ENCODE measurements at regions of chr9 and their contacts with region 1.

Region 1: GRCh38 chr9:131046581-131047202 is 37.7 kb downstream of the LAMC3 start:
- DNase-seq: peak; percentile 75
- ATAC-seq: peak; percentile 83
- H3K4me3 Mint-ChIP-seq: no peak overlapping the region
- H3K27ac Mint-ChIP-seq: no peak overlapping the region
- H3K4me1 Mint-ChIP-seq: peaks cover 10% of the 10 kb centered on the region
- H3K27me3 Mint-ChIP-seq: peaks cover 4% of the 10 kb centered on the region
- CTCF ChIP-seq: peak; percentile 40

Region 2: GRCh38 chr9:130701056-130702022 is 345.4 kb before region 1 on chr9:
- CTCF ChIA-PET with region 1: interaction called, 15 read pairs
- POLR2A ChIA-PET with region 1: no interaction called
- intact Hi-C with region 1: loop called (anchors 2 kb)
- DNase-seq: peak; percentile 51
- ATAC-seq: peak; percentile 84
- H3K4me3 Mint-ChIP-seq: no peak overlapping the region
- H3K27ac Mint-ChIP-seq: no peak overlapping the region
- H3K4me1 Mint-ChIP-seq: peaks cover 19% of the 10 kb centered on the region
- H3K27me3 Mint-ChIP-seq: no peaks in the 10 kb centered on the region
- CTCF ChIP-seq: no peak

Region 3: DNA sequence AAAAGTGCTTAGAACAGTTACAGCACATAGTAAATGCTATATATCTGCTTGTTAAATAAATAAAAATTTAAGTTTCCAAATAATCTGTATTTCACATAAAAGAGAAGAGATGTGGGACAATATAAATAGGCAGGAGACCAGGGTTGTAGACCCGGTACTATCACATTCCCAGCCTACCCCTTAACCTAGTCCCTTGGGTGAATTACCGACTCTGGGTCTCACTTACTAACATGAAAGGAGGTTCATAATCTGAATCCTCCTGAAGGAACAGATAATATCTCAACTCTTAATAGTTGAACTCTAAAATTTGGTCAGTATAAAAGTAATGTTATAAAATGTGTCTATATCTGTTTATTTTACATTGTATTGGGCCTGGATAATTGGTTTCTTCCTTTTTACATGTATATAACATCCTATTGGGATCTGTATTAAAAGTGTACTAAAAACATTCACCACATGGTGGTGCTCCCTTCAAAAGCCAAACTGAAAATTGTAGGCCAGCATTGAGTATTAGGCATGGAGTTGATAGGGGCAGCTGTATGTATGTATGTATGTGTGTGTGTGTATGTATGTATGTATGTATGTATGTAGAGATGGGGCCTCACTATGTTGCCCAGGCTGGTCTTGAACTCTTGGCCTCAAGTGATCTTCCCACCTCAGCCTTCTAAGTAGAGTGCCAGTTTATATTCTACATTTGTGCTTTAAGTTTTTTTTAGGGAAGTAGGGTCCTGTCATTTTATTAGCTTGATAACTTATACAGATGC is 275.8 kb before region 1 on chr9:
- CTCF ChIA-PET with region 1: interaction called, 7 read pairs
- POLR2A ChIA-PET with region 1: interaction called, 3 read pairs
- intact Hi-C with region 1: loop called (anchors 1 kb)
- DNase-seq: no peak
- ATAC-seq: peak; percentile 66
- H3K4me3 Mint-ChIP-seq: no peak overlapping the region
- H3K27ac Mint-ChIP-seq: no peak overlapping the region
- H3K4me1 Mint-ChIP-seq: peaks cover 34% of the 10 kb centered on the region
- H3K27me3 Mint-ChIP-seq: no peaks in the 10 kb centered on the region
- CTCF ChIP-seq: no peak

Region 4: GRCh38 chr9:130940693-130941576 is 105.8 kb before region 1 on chr9:
- CTCF ChIA-PET with region 1: interaction called, 4 read pairs
- POLR2A ChIA-PET with region 1: no interaction called
- intact Hi-C with region 1: loop called (anchors 1 kb)
- DNase-seq: peak; percentile 74
- ATAC-seq: peak; percentile 89
- H3K4me3 Mint-ChIP-seq: peak overlapping the region; percentile 53
- H3K27ac Mint-ChIP-seq: no peak overlapping the region
- H3K4me1 Mint-ChIP-seq: peaks cover 16% of the 10 kb centered on the region
- H3K27me3 Mint-ChIP-seq: peaks cover 44% of the 10 kb centered on the region
- CTCF ChIP-seq: peak; percentile 48

Region 5: GRCh38 chr9:131018621-131019020 is 28.1 kb before region 1 on chr9:
- CTCF ChIA-PET with region 1: interaction called, 22 read pairs
- POLR2A ChIA-PET with region 1: no interaction called
- intact Hi-C with region 1: loop called (anchors 2 kb)
- DNase-seq: no peak
- ATAC-seq: no peak
- H3K4me3 Mint-ChIP-seq: no peak overlapping the region
- H3K27ac Mint-ChIP-seq: no peak overlapping the region
- H3K4me1 Mint-ChIP-seq: no peaks in the 10 kb centered on the region
- H3K27me3 Mint-ChIP-seq: peaks cover 12% of the 10 kb centered on the region
- CTCF ChIP-seq: no peak

Measured in activated B cell treated with CpG ODN at 0.5 μM for 24 hours (primary cell).